IMR-90 (cell line): ENCODE measurements at regions of chr2 and their contacts with region 1.

Region 1: DNA sequence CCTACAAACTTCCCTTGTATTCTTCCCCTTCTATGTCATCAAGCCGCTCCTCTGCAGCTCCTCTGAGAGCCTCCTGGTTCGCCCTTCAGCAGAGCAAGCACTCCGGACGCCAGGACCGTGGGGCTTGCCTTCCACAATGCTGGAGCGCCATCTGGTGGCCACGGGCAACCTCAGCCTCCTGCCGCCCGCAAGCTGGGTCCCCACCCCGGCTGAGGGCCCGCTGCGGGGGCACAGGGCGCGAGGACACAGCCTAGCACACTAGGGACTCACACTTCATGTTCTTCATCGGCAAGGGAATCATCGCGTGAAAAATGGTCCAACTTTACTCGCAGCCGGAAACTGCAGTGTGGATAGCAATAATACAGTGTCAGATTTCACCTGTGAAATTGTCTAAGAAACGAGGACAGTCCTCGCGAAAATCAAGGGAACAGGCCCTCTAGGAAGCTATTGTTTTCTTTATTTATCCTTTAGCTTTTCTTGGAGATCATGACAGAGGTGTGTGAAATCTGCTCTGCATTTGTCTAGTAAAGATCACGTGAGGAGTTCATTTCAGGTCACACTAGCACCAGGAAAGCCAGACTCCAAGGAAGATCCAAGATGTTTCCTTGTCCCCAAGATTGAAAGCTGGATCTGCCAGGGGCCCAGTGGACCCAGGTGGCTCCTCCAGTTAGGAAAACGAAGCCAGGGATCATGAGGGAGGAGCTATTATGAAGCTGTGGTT is 5.8 kb downstream of the PRLH start:
- DNase-seq: peak; percentile 92
- ATAC-seq: peak; percentile 99
- H3K4me3 ChIP-seq: peak overlapping the region; percentile 11; the same call in 1 of the 2 replicates
- H3K27ac ChIP-seq: no peak overlapping the region
- H3K4me1 ChIP-seq: peaks cover 7% of the 10 kb centered on the region; the same call in 1 of the 2 replicates
- H3K27me3 ChIP-seq: no peaks in the 10 kb centered on the region
- CTCF ChIP-seq: peak; percentile 99
- POLR2A ChIP-seq: peak; percentile 52; the same call in 1 of the 2 replicates
- RAD21 ChIP-seq: peak; percentile 100

Region 2: GRCh38 chr2:236343400-236344161 is 1228.6 kb before region 1 on chr2:
- CTCF ChIA-PET with region 1: no interaction called
- POLR2A ChIA-PET with region 1: no interaction called
- dilution Hi-C with region 1: no loop called
- in situ Hi-C with region 1: loop called (anchors 25 kb)
- intact Hi-C with region 1: no loop called
- DNase-seq: peak; percentile 75
- ATAC-seq: peak; percentile 84
- H3K4me3 ChIP-seq: no peak overlapping the region
- H3K27ac ChIP-seq: no peak overlapping the region
- H3K4me1 ChIP-seq: no peaks in the 10 kb centered on the region
- H3K27me3 ChIP-seq: peaks cover 4% of the 10 kb centered on the region
- CTCF ChIP-seq: peak; percentile 79
- POLR2A ChIP-seq: no peak
- RAD21 ChIP-seq: peak; percentile 62

Region 3: GRCh38 chr2:237092920-237093781 is 479.0 kb before region 1 on chr2:
- CTCF ChIA-PET with region 1: interaction called, 3 read pairs
- POLR2A ChIA-PET with region 1: no interaction called
- dilution Hi-C with region 1: no loop called
- in situ Hi-C with region 1: no loop called
- intact Hi-C with region 1: loop called (anchors 1 kb)
- DNase-seq: peak; percentile 85
- ATAC-seq: peak; percentile 72
- H3K4me3 ChIP-seq: no peak overlapping the region
- H3K27ac ChIP-seq: peak overlapping the region; percentile 75; the same call in 1 of the 2 replicates
- H3K4me1 ChIP-seq: peaks cover 20% of the 10 kb centered on the region
- H3K27me3 ChIP-seq: no peaks in the 10 kb centered on the region
- CTCF ChIP-seq: peak; percentile 84
- POLR2A ChIP-seq: no peak
- RAD21 ChIP-seq: peak; percentile 87

Region 4: GRCh38 chr2:237154082-237154638 is 418.0 kb before region 1 on chr2:
- CTCF ChIA-PET with region 1: interaction called, 3 read pairs
- POLR2A ChIA-PET with region 1: no interaction called
- dilution Hi-C with region 1: no loop called
- in situ Hi-C with region 1: no loop called
- intact Hi-C with region 1: loop called (anchors 1 kb)
- DNase-seq: peak; percentile 81
- ATAC-seq: no peak; the same call in 1 of the 2 replicates
- H3K4me3 ChIP-seq: no peak overlapping the region
- H3K27ac ChIP-seq: peak overlapping the region; percentile 1; the same call in 1 of the 2 replicates
- H3K4me1 ChIP-seq: peaks cover 30% of the 10 kb centered on the region
- H3K27me3 ChIP-seq: no peaks in the 10 kb centered on the region
- CTCF ChIP-seq: peak; percentile 91
- POLR2A ChIP-seq: 0 out of 2 replicates have a peak, but pooled peaks have one; percentile 21
- RAD21 ChIP-seq: peak; percentile 97

Region 5: DNA sequence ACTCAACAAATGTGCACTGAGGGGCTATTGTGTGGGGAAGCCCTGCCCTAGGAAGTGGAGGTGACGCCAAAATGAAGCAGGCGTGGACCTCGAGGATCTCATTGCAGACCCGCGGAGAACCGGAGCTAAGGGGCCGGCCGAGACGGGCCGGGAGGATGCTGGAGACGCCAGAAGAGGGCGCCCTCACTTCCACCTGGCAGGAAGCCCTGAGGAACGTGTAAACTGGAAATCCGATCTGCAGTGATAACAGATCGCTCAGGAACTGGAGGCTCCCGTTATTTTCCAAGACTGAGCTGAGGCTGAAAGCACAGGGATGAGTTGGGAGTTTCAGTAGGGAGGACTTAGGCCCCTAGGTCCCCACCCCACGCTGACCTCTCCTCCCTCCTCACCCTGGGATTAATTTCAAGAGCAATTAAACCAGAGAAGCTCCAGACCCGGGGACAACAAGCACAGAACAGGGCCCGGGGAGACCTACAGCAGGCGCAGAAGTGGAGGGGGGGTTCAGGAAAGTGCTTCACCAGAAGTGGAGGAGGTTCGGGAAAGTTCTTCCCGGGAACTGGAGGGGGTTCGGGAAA is 150.6 kb before region 1 on chr2:
- CTCF ChIA-PET with region 1: interaction called, 20 read pairs
- POLR2A ChIA-PET with region 1: no interaction called
- dilution Hi-C with region 1: no loop called
- in situ Hi-C with region 1: loop called (anchors 10 kb)
- intact Hi-C with region 1: loop called (anchors 1 kb)
- DNase-seq: peak; percentile 90
- ATAC-seq: peak; percentile 85
- H3K4me3 ChIP-seq: peak overlapping the region; percentile 7; the same call in 1 of the 2 replicates
- H3K27ac ChIP-seq: peak overlapping the region; percentile 36
- H3K4me1 ChIP-seq: peaks cover 13% of the 10 kb centered on the region
- H3K27me3 ChIP-seq: no peaks in the 10 kb centered on the region
- CTCF ChIP-seq: peak; percentile 89
- POLR2A ChIP-seq: peak; percentile 59
- RAD21 ChIP-seq: peak; percentile 80

Region 6: GRCh38 chr2:237500681-237501424 is 71.3 kb before region 1 on chr2:
- CTCF ChIA-PET with region 1: interaction called, 9 read pairs
- POLR2A ChIA-PET with region 1: no interaction called
- dilution Hi-C with region 1: no loop called
- in situ Hi-C with region 1: no loop called
- intact Hi-C with region 1: loop called (anchors 1 kb)
- DNase-seq: peak; percentile 100
- ATAC-seq: peak; percentile 90
- H3K4me3 ChIP-seq: no peak overlapping the region
- H3K27ac ChIP-seq: peak overlapping the region; percentile 86
- H3K4me1 ChIP-seq: peaks cover 25% of the 10 kb centered on the region
- H3K27me3 ChIP-seq: no peaks in the 10 kb centered on the region
- CTCF ChIP-seq: no peak
- POLR2A ChIP-seq: peak; percentile 66
- RAD21 ChIP-seq: peak; percentile 11

Region 7: GRCh38 chr2:237614151-237614720 is 42.1 kb after region 1 on chr2:
- CTCF ChIA-PET with region 1: no interaction called
- POLR2A ChIA-PET with region 1: no interaction called
- dilution Hi-C with region 1: no loop called
- in situ Hi-C with region 1: no loop called
- intact Hi-C with region 1: no loop called
- DNase-seq: peak; percentile 52
- ATAC-seq: no peak; the same call in none of the 2 replicates
- H3K4me3 ChIP-seq: no peak overlapping the region
- H3K27ac ChIP-seq: no peak overlapping the region
- H3K4me1 ChIP-seq: peaks cover 30% of the 10 kb centered on the region
- H3K27me3 ChIP-seq: no peaks in the 10 kb centered on the region
- CTCF ChIP-seq: no peak
- POLR2A ChIP-seq: no peak
- RAD21 ChIP-seq: no peak